Activated naive CD4-positive, alpha-beta T cell treated with anti-CD3 and anti-CD28 coated beads for 36 hours (primary cell): ENCODE measurements at regions of chr7 and their contacts with region 1.

Region 1: DNA sequence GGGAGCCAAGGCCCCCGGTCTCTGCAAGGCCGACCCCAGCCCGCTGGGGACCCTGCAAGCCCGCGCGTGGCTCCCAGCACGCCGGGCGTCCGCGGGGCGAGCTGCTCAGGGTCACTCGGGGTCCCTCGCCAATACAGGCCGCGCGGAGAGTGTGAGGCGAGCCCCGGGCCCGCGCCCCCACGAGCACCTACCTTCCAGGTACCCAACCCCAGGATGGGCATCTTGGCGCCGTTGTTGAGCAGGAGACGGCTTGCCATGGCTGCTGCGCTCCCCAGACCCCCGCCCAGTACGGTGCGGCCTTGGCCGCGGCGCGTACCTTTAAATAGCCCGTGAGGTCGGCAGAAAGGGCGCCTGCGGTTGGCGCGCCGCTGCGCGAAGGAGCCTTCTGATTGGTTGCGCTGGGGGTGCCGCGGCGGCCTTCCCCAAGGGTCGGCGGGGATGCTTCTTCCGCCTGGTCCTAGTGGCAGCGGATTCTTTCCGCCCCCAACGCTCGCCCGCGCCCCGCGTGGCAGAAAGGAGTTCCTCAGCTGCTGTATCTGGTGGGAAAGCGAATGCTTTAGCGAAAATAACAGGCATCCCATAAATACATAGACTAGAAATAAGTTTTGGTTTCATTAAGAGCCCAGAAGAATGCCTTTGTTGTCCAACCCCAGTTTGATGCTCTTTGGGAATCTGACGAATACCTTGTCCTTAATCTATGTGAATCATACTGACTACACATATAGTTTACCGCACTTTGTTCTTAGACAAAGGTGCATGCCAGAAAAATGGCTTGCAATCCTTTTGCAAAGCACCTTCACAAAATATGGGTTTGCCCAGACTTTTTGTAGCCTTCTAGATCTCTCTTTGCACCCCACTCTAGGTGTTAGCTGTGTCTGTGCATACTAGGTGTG is at the start of gene AKR1B1:
- DNase-seq: peak; percentile 90
- H3K4me3 Mint-ChIP-seq: peak within 1 kb of the TSS; percentile 81
- H3K27ac Mint-ChIP-seq: peak within 1 kb of the TSS; percentile 70
- H3K4me1 Mint-ChIP-seq: peaks cover 46% of the 10 kb centered on the region
- H3K27me3 Mint-ChIP-seq: no peaks in the 10 kb centered on the region
- total RNA-seq, gene AKR1B1: 103 to 107 TPM

Region 2: DNA sequence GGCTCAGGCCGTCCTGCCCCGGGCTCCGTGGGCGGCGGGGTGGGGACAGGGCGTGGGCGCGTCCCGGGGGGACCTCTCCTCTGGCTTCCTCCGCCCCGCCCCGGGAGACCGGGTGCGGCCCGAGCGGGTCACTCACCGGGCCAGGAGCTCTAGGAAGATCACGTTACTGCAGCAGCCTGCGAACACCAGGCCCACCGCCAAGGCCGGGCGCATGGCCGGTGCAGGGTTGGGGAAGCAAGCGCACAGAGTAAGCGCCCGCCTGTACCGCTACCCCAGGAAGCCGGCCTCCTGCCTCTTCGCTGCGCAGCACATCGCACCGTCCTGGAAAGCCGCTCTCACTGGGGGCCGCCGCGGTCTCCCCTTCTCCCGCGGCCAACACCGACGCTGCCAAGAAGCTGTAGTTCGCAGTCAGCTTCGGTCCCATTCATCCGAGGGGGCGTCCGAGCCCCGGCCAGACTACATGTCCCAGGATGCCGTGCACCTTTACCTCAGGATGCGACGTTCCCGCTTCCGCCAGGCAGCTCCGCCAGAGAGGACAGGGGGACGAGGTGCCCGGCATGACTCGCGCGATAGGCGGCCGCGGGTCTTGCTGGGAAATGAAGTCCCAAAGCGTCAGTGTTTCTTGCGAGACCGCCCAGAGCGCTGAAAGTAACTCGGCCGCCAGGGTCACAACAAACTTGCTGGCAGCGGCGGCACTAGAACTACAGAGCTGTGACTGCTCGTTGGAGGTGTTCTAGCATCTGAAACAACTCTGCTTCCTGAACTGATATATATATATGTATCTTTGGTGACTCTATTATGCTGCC is 142.3 kb before region 1 on chr7 and contains the start of gene SLC35B4:
- CTCF ChIA-PET with region 1: no interaction called
- intact Hi-C with region 1: loop called (anchors 1 kb)
- DNase-seq: peak; percentile 97
- H3K4me3 Mint-ChIP-seq: peak within 1 kb of the TSS; percentile 92
- H3K27ac Mint-ChIP-seq: peak within 1 kb of the TSS; percentile 77
- H3K4me1 Mint-ChIP-seq: peaks cover 16% of the 10 kb centered on the region
- H3K27me3 Mint-ChIP-seq: no peaks in the 10 kb centered on the region
- total RNA-seq, gene SLC35B4: 7.9 to 10.3 TPM

Region 3: GRCh38 chr7:134514663-134515062 is 55.6 kb after region 1 on chr7:
- CTCF ChIA-PET with region 1: no interaction called
- intact Hi-C with region 1: loop called (anchors 1 kb)
- DNase-seq: peak; percentile 22
- H3K4me3 Mint-ChIP-seq: no peak overlapping the region
- H3K27ac Mint-ChIP-seq: no peak overlapping the region
- H3K4me1 Mint-ChIP-seq: peaks cover 10% of the 10 kb centered on the region
- H3K27me3 Mint-ChIP-seq: peaks cover 10% of the 10 kb centered on the region

Region 4: DNA sequence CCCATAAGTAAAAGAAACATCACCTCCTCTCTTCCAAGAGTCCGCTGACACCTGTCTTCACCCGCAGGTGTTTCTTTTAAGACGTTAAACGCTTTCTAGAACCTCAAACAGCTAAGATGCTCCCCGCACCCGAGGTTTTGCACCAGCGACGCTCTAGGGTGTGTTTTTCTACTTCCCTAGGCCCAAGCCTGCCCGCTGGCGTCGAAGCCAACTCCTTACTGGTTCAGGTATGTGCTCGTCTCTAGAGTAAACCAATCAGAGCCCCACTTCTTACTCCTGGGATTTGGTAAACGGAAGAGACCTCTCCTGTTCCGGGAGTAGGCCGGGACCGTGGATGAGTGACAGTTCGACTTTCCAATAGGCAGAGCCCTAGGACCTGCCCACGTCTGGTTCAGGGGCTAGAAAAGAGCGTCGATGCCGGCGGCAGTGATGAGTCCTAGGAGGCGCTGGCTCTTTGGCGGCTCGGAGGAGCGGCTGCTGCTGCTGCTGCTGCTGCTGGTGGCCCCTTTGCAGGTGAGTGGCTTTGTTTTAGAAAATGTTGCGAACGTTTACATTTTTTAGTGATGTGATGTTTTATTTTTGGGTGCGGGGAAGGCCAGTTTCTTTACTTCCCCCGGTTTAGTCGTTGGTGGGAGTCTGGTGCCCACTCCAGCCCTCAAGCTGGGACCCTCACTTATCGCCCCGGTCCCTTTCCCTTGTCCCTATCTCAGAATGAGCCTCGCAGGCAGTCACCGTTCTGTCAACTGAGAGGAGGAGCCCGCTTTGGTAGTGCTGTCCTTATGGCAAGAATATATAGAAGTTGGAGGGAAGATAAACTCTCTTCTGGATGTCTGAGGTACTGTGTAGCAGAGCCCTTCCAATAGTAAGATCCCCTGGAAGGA is 187.6 kb after region 1 on chr7 and contains the start of gene BPGM:
- CTCF ChIA-PET with region 1: no interaction called
- intact Hi-C with region 1: loop called (anchors 2 kb)
- DNase-seq: peak; percentile 99
- H3K4me3 Mint-ChIP-seq: no peak within 1 kb of the TSS
- H3K27ac Mint-ChIP-seq: no peak within 1 kb of the TSS
- H3K4me1 Mint-ChIP-seq: peaks cover 37% of the 10 kb centered on the region
- H3K27me3 Mint-ChIP-seq: no peaks in the 10 kb centered on the region
- total RNA-seq, gene BPGM: 13.9 to 14.2 TPM

Region 5: DNA sequence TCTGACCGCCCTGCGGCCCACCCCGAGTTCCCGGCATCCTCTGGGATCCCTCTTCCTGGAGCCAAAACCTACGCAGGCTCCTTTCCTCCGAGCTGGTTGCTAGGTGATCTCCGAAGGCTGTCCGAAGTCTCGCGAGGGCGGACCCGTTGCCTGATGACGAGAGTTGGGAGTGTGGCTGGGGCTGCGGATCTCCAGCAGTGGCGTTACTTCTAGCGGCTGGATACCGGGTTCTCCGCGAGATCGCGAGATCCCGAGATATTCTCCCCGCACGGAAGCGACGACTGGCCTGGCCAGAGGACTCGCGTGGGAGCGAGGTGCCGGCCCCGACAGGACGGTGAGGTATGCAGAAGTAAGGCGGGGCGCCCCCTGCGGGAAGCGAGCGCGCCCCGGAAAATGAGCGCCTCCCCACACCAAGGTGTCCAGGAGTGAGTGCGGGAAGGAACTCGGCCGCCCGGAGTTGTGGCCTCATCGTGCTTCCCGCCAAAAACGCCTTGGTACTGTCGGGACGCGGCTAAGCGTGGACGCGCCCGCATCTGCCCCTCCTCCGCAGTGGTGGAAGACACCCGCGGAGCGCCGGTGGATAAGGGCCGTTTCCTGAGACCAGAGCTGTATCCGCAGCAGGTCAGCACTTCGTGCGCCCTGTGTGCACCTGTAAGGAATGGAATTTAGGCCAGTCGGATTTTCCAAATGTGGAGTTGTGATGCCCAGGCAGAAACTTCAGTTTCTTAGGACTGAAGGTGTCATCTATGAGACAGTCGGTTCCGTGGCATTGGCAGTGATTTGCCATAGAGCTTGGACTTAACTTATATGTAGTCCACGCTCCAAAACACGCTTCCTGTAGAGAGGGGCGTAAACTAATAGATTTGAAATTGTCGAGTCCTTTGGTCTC is 527.6 kb after region 1 on chr7 and contains the start of gene AGBL3:
- CTCF ChIA-PET with region 1: no interaction called
- intact Hi-C with region 1: loop called (anchors 5 kb)
- DNase-seq: peak; percentile 97
- H3K4me3 Mint-ChIP-seq: peak within 1 kb of the TSS; percentile 96
- H3K27ac Mint-ChIP-seq: peak within 1 kb of the TSS; percentile 98
- H3K4me1 Mint-ChIP-seq: peaks cover 32% of the 10 kb centered on the region
- H3K27me3 Mint-ChIP-seq: no peaks in the 10 kb centered on the region
- total RNA-seq, gene AGBL3: 2.6 to 3.6 TPM

Region 6: DNA sequence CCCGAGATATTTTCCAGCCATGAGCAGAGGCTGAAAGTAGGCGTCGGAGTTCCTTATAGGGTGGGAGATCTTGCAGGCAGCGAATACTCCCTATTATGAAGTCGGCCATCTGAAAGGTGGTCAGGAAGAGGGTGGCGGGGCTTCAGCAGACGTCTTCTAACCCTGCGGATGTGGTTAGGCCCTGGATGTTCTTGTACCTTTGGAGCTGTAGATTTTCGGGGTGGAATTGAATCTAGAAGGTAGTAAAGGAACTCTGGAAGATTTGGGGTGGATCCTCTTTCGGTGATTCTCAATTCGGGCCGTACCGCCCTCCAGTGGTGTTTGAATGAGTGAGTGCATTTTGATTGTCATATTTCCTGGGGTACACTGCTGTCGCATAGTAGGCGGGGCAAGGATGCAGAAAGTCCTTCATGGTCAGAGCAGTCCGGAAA is 1099.3 kb after region 1 on chr7:
- CTCF ChIA-PET with region 1: no interaction called
- intact Hi-C with region 1: loop called (anchors 5 kb)
- DNase-seq: peak; percentile 79
- H3K4me3 Mint-ChIP-seq: no peak overlapping the region
- H3K27ac Mint-ChIP-seq: no peak overlapping the region
- H3K4me1 Mint-ChIP-seq: peaks cover 29% of the 10 kb centered on the region
- H3K27me3 Mint-ChIP-seq: no peaks in the 10 kb centered on the region